H1 (cell line): ENCODE measurements at regions of chr10 and their contacts with region 1.

Region 1: DNA sequence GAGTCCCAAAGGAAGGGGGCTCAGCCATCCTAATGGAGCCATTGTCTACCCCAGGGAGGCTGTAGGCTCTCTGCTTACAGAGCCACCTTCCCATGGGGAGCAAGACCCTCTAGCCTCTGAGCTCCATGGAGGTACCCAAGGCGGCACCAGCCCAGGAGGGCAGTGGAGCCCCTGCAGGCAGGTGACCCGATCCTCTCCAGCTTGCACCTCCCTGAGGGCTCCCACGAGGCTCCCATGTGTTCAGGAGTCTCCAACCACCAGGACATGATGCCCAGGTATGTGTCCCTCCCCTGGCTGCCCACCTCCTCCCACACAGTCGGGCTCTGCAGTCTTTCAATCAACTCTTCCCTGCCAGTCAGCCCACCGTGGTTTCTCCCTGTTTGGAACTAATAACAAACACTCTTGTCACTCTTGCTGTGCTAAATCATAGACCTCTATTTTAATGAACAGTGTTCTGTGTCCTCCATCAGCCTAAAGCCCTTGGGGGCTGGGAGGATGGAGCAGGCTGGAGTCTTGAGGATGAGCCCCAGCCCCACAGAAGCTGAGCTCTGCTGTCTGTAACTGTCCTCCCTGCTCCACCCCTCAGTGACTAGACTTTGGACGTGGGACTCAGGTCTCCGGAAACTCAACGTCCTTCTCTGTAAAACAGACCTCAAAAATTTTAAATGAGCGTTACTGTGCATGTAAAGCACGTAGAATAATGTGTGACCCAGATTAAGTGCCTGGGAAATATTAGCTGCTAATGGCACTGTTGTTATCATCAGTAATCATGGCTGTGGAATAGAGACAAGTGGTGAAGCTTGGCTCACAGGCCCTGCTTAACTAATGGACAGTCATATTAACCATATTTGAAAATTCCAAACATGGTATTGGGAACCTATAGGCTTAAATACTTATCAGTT is 298.9 kb downstream of the WDR37 start:
- DNase-seq: no peak
- H3K4me3 ChIP-seq: no peak overlapping the region
- H3K27ac ChIP-seq: no peak overlapping the region
- H3K4me1 ChIP-seq: peaks cover 2 to 11% (median 4%) of the 10 kb centered on the region in 4 experiments; a peak in 6 of 7 replicates
- H3K27me3 ChIP-seq: 0 out of 7 replicates have a peak, but pooled peaks cover 0 to 2% (median 0%) of the 10 kb centered on the region in 4 experiments
- CTCF ChIP-seq: no peak
- EP300 ChIP-seq: no peak
- POLR2A ChIP-seq: no peak
- RAD21 ChIP-seq: no peak

Region 2: DNA sequence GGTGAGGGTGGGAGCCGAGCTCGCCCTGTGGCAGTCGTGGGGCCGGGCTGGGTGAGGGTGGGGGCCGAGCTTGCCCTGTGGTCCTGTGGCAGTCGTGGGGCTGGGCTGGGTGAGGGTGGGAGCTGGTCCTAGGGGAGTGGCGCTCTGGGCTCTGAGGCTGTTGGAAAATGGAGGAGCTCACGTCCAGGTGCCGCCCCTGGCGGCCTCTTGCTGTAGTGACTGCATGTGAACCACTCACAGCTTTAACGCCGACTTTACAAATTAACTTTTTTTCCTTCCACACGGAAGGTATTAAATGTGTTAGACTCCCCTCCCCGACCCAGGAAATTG is 13.7 kb after region 1 on chr10:
- CTCF ChIA-PET with region 1: interaction called, 21 read pairs
- POLR2A ChIA-PET with region 1: interaction called, 5 read pairs
- DNase-seq: peak; percentile 43 to 74
- H3K4me3 ChIP-seq: peak overlapping the region in 1 of 4 experiments; percentile 11; a peak in 1 of 8 replicates
- H3K27ac ChIP-seq: no peak overlapping the region
- H3K4me1 ChIP-seq: peaks cover 0 to 6% (median 4%) of the 10 kb centered on the region in 4 experiments; a peak in 5 of 7 replicates
- H3K27me3 ChIP-seq: no peaks in the 10 kb centered on the region
- CTCF ChIP-seq: peak; percentile 72 to 78 (median 73)
- EP300 ChIP-seq: no peak
- POLR2A ChIP-seq: no peak
- RAD21 ChIP-seq: peak; percentile 67 to 69